HepG2 (cell line): ENCODE measurements at regions of chr1 and their contacts with region 1.

Region 1: DNA sequence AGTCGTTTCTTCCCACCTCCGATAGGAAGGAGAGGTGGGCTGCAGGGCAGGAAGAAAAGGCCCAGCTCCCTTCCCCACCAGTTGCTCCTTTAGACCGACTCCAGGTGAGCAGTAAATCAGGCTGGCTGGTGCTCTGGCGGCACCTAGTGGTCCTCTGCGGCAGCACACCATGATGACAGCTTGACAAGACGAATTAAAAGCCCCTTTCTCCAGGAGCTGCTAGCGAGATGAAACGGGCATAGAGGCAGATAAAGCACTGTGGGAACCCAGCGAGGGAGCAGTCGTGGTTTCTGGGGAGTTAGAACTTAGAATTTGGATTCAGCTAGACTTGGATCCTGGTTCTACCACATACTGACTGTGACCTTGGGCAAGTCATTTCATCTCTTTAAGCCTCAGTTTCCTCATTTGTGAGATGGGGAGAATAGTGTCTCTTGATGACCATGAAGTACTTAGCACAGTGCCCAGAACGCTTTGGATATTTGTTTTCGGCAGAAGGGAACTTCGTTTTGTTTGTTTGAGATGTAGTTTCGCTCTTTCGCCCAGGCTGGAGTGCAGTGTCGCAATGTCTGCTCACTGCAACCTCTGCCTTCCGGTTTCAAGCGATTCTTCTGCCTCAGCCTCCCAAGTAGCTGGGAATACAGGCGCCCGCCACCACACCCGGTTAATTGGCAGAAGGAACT is 21.8 kb upstream of the COL9A2 start:
- DNase-seq: peak; percentile 76
- ATAC-seq: peak; percentile 91
- H3K4me3 ChIP-seq: peak overlapping the region; percentile 30 to 54 (median 40)
- H3K27ac ChIP-seq: no peak overlapping the region
- H3K4me1 ChIP-seq: peaks cover 57% of the 10 kb centered on the region
- H3K27me3 ChIP-seq: no peaks in the 10 kb centered on the region; a peak in 2 of 5 replicates
- CTCF ChIP-seq: peak; percentile 99
- EP300 ChIP-seq: no peak
- POLR2A ChIP-seq: no peak
- RAD21 ChIP-seq: peak; percentile 94

Region 2: DNA sequence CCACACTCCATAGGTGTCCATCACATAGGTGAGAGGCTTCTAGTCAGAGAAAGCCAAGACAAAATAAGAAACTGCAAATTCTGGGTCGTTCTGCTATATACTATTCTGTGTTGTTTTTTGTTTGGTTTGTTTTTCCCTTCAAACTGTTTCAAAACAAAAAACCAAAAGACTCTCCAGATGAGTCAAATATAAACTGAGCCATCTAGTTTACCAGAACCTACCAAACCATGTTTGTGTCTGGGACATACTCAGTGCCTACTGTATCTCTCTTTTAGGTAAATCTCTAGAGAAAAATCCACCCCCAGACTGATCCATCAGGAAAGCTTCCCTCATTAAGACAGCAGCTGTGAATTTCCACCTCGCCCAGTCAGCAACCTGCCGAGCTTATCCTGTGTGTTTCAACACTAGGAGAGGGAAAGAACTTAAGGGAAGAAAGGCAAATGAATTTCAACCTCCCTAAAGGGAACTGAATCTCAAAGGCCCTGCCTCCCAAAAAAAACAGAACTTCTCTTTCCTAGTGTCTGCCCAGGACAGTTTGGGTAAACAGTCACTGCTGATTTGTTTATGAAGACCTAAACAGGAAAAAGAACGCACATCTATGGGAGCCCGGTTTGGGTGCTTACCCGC is 259.0 kb before region 1 on chr1:
- CTCF ChIA-PET with region 1: interaction called, 6 read pairs
- POLR2A ChIA-PET with region 1: no interaction called
- in situ Hi-C with region 1: no loop called
- intact Hi-C with region 1: loop called (anchors 1 kb)
- DNase-seq: no peak
- ATAC-seq: no peak
- H3K4me3 ChIP-seq: no peak overlapping the region
- H3K27ac ChIP-seq: no peak overlapping the region
- H3K4me1 ChIP-seq: no peaks in the 10 kb centered on the region
- H3K27me3 ChIP-seq: no peaks in the 10 kb centered on the region
- CTCF ChIP-seq: no peak
- EP300 ChIP-seq: no peak
- POLR2A ChIP-seq: no peak
- RAD21 ChIP-seq: no peak

Region 3: DNA sequence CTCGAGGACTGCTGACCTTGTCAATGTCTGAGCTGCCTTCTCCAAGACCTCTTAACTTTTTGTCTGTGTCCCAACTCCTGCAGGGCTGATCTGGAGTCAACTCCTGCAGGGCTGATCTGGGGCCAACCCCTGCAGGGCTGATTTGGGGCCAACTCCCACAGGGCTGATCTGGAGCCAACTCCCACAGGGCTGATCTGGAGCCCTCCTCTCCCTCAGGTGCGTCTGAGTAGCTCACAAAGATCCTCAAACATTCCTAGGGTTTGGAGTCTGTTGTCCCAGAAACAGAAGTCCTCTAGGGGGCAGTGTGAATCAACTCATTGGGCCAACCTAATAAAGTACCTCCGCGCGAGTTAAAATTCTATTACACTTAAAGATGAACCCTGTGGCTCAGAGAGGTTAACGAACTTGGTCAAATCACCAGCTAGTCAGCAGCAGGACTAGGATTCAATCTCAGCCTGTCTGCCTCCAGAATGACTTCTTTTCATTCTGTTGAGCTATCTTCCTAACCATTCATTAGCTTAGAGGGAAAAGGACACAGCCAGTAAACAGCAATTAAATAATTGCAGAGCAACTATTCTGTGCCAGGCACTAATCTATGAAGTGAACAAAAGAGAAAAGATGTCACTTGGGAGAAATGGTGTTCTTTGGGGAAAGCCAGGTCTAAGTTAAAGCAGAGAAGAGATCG is 194.9 kb before region 1 on chr1:
- CTCF ChIA-PET with region 1: interaction called, 16 read pairs
- POLR2A ChIA-PET with region 1: interaction called, 3 read pairs
- in situ Hi-C with region 1: loop called (anchors 5 kb)
- intact Hi-C with region 1: loop called (anchors 1 kb)
- DNase-seq: peak; percentile 64
- ATAC-seq: peak; percentile 95
- H3K4me3 ChIP-seq: no peak overlapping the region
- H3K27ac ChIP-seq: no peak overlapping the region
- H3K4me1 ChIP-seq: peaks cover 19% of the 10 kb centered on the region
- H3K27me3 ChIP-seq: peaks cover 0 to 10% of the 10 kb centered on the region in 2 experiments; a peak in 2 of 5 replicates
- CTCF ChIP-seq: peak; percentile 82
- EP300 ChIP-seq: no peak
- POLR2A ChIP-seq: no peak
- RAD21 ChIP-seq: peak; percentile 65

Region 4: GRCh38 chr1:40153073-40153770 is 185.7 kb before region 1 on chr1:
- CTCF ChIA-PET with region 1: interaction called, 15 read pairs
- POLR2A ChIA-PET with region 1: interaction called, 3 read pairs
- in situ Hi-C with region 1: no loop called
- intact Hi-C with region 1: loop called (anchors 1 kb)
- DNase-seq: peak; percentile 32
- ATAC-seq: no peak; the same call in 2 of the 3 replicates
- H3K4me3 ChIP-seq: peak overlapping the region in 2 of 3 experiments; percentile 26 to 33; a peak in 3 of 6 replicates
- H3K27ac ChIP-seq: no peak overlapping the region
- H3K4me1 ChIP-seq: peaks cover 8% of the 10 kb centered on the region
- H3K27me3 ChIP-seq: peaks cover 0 to 4% of the 10 kb centered on the region in 2 experiments; a peak in 1 of 5 replicates
- CTCF ChIP-seq: peak; percentile 79
- EP300 ChIP-seq: no peak
- POLR2A ChIP-seq: no peak
- RAD21 ChIP-seq: no peak

Region 5: DNA sequence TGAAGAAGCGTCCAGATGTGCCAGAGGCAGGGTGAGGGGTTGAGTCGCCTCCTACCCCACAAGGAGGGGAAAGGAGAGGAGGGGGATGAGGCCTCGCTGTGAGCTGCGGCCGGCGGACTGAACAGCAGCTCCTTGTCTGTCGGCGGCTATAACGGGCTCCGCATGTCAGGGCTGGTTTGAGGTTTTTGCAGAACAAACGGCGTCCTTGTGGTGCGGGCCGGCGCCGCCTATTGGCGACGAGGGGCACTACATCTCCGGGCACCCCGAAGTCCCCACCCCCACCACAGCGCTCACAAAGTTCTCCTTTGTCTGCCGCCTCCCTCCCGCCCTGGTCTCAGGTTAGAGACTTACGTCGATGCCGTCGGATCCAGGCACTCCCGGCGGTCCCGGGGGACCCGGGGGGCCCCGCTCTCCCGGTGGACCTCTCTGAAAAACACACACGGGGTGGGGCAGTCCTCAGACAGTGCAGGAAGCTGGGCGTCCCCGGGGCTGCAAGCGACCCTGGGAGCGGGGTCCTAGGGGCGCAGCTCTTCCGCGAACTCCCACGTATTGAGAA is 23.6 kb before region 1 on chr1:
- CTCF ChIA-PET with region 1: interaction called, 6 read pairs
- POLR2A ChIA-PET with region 1: interaction called, 16 read pairs
- in situ Hi-C with region 1: no loop called
- intact Hi-C with region 1: no loop called
- DNase-seq: peak; percentile 83
- ATAC-seq: peak; percentile 66
- H3K4me3 ChIP-seq: peak overlapping the region; percentile 58 to 93 (median 89); a peak in 5 of 6 replicates
- H3K27ac ChIP-seq: peak overlapping the region; percentile 82
- H3K4me1 ChIP-seq: peaks cover 47% of the 10 kb centered on the region
- H3K27me3 ChIP-seq: peaks cover 0 to 11% of the 10 kb centered on the region in 2 experiments; a peak in 1 of 5 replicates
- CTCF ChIP-seq: peak; percentile 92
- EP300 ChIP-seq: peak in 1 of 2 experiments; percentile 19; a peak in 1 of 4 replicates
- POLR2A ChIP-seq: peak; percentile 75 to 76
- RAD21 ChIP-seq: peak; percentile 79

Region 6: DNA sequence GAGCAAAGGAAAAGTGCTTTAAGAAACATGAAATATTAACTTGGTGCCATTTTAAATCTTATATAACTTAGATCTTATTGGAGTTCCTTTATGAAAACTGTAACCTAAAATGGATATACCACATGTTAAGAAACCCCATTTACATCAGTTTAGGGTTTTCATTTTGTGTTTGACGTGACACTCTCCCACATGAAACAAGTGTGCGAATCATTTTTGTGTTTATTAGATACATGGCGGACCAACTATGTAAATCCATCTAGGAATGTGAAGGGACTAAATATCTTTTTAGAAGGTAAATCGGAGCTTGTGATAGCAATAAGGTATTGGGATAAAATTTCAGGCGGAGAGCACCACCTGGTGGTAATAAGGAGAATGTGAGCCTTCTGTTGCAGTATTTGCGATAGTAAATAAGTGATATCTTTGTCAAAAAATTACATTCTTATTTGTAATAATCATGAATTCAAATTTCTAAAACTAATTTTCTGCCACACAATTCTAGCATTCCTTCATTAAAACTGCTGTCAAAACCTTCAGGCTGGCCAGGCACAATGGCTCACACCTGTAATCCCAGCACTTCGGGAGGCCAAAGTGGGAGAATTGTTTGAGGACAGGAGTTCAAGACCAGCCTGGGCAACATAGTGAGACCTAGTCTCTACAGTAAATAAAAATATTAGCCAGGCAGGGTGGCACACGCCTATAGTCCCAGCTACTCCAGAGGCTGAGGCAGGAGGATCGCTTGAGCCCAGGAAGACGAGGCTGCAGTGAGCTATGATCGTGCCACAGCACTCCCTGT is 66.0 kb after region 1 on chr1:
- CTCF ChIA-PET with region 1: interaction called, 11 read pairs
- POLR2A ChIA-PET with region 1: interaction called, 4 read pairs
- in situ Hi-C with region 1: loop called (anchors 5 kb)
- intact Hi-C with region 1: loop called (anchors 1 kb)
- DNase-seq: peak; percentile 60
- ATAC-seq: peak; percentile 48; the same call in 1 of the 3 replicates
- H3K4me3 ChIP-seq: no peak overlapping the region
- H3K27ac ChIP-seq: no peak overlapping the region
- H3K4me1 ChIP-seq: peaks cover 18% of the 10 kb centered on the region
- H3K27me3 ChIP-seq: no peaks in the 10 kb centered on the region
- CTCF ChIP-seq: peak; percentile 78
- EP300 ChIP-seq: no peak
- POLR2A ChIP-seq: no peak
- RAD21 ChIP-seq: peak; percentile 76